Naive thymus-derived CD4-positive, alpha-beta T cell (primary cell): ENCODE measurements at regions of chr10 and their contacts with region 1.

Region 1: GRCh38 chr10:109934958-109935706 is 11.8 kb upstream of the XPNPEP1 start:
- DNase-seq: peak in 8 of 9 donors; percentile 23 to 54 (median 46)
- ATAC-seq: peak; percentile 47
- H3K4me3 ChIP-seq: peak overlapping the region; percentile 33
- H3K4me3 Mint-ChIP-seq: peak overlapping the region; percentile 72 to 97 (median 87)
- H3K27ac ChIP-seq: peak overlapping the region; percentile 64
- H3K27ac Mint-ChIP-seq: peak overlapping the region; percentile 88 to 99 (median 96)
- H3K4me1 ChIP-seq: peaks cover 36 to 56% of the 10 kb centered on the region in 2 donors
- H3K4me1 Mint-ChIP-seq: peaks cover 33 to 83% (median 71%) of the 10 kb centered on the region in 7 donors
- H3K27me3 ChIP-seq: no peaks in the 10 kb centered on the region
- H3K27me3 Mint-ChIP-seq: peaks cover 0 to 8% (median 0%) of the 10 kb centered on the region in 5 donors

Region 2: DNA sequence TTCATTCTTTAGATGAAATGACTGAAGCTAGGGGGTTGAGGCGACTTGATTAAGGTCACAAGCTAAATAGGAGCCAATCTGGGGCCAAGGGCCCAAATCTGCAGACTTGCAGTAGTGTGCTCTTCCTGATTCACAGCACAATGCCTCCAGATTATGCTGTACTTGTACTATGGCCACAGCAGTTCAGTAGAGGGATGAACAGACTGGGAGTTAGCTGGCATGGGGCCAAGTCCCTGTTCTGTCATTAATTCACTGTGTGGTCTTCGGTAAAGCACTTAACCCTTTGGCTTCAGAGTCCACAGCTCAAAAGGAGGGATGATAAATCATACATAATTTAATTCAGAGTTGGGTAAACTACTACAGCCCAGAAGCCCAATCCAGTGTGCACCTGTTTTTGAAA is 208.7 kb before region 1 on chr10:
- CTCF ChIA-PET with region 1: no interaction called
- POLR2A ChIA-PET with region 1: no interaction called
- intact Hi-C with region 1: no loop called
- DNase-seq: no peak
- ATAC-seq: no peak
- H3K4me3 ChIP-seq: no peak overlapping the region
- H3K4me3 Mint-ChIP-seq: no peak overlapping the region
- H3K27ac ChIP-seq: no peak overlapping the region
- H3K27ac Mint-ChIP-seq: no peak overlapping the region
- H3K4me1 ChIP-seq: no peaks in the 10 kb centered on the region
- H3K4me1 Mint-ChIP-seq: no peaks in the 10 kb centered on the region
- H3K27me3 ChIP-seq: no peaks in the 10 kb centered on the region
- H3K27me3 Mint-ChIP-seq: peaks cover 0 to 19% (median 0%) of the 10 kb centered on the region in 5 donors

Region 3: DNA sequence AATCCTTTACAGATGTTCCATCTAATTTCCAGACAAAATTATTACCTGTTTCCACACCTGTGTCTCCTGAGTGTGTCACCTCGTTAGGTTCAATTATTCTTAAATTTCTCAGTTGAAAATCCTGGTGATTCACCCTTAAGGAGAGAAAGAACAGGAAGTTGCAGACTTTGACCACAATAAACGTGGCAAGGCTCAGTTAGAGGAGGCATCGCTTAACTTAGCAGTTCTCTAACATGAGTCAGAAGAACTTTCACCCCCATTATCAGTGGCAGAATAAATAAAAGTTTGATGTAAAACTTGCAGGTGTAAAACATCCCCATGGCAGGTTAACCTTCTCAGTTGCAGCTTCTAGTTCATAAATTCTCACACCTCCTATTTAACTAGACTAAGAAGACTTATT is 20.2 kb before region 1 on chr10:
- CTCF ChIA-PET with region 1: interaction called, 4 read pairs
- POLR2A ChIA-PET with region 1: interaction called, 7 read pairs
- intact Hi-C with region 1: loop called in 1 of 2 experiments (anchors 1 kb)
- DNase-seq: peak in 7 of 9 donors; percentile 37 to 71 (median 56)
- ATAC-seq: peak; percentile 93
- H3K4me3 ChIP-seq: no peak overlapping the region
- H3K4me3 Mint-ChIP-seq: peak overlapping the region; percentile 56 to 78 (median 68)
- H3K27ac ChIP-seq: no peak overlapping the region
- H3K27ac Mint-ChIP-seq: peak overlapping the region in 8 of 9 donors; percentile 40 to 88 (median 58)
- H3K4me1 ChIP-seq: peaks cover 32 to 60% of the 10 kb centered on the region in 2 donors
- H3K4me1 Mint-ChIP-seq: peaks cover 64 to 94% (median 87%) of the 10 kb centered on the region in 7 donors
- H3K27me3 ChIP-seq: no peaks in the 10 kb centered on the region
- H3K27me3 Mint-ChIP-seq: no peaks in the 10 kb centered on the region

Region 4: GRCh38 chr10:109922976-109923921 is 11.9 kb before region 1 on chr10 and contains the start of gene XPNPEP1:
- CTCF ChIA-PET with region 1: interaction called, 3 read pairs
- POLR2A ChIA-PET with region 1: interaction called, 16 read pairs
- intact Hi-C with region 1: loop called in 1 of 2 experiments (anchors 1 kb)
- DNase-seq: peak; percentile 55 to 90 (median 66)
- ATAC-seq: peak; percentile 98
- H3K4me3 ChIP-seq: peak within 1 kb of the TSS; percentile 67
- H3K4me3 Mint-ChIP-seq: peak within 1 kb of the TSS; percentile 78 to 94 (median 90)
- H3K27ac ChIP-seq: peak within 1 kb of the TSS; percentile 83
- H3K27ac Mint-ChIP-seq: peak within 1 kb of the TSS; percentile 75 to 95 (median 89)
- H3K4me1 ChIP-seq: peaks cover 30 to 39% of the 10 kb centered on the region in 2 donors
- H3K4me1 Mint-ChIP-seq: peaks cover 36 to 58% (median 54%) of the 10 kb centered on the region in 7 donors
- H3K27me3 ChIP-seq: no peaks in the 10 kb centered on the region
- H3K27me3 Mint-ChIP-seq: peaks cover 0 to 16% (median 0%) of the 10 kb centered on the region in 5 donors
- total RNA-seq, gene XPNPEP1: 44.1 to 100 (median 60.7) TPM

Region 5: GRCh38 chr10:109956454-109957091 is 21.4 kb after region 1 on chr10:
- CTCF ChIA-PET with region 1: interaction called, 3 read pairs
- POLR2A ChIA-PET with region 1: interaction called, 4 read pairs
- intact Hi-C with region 1: loop called in 1 of 2 experiments (anchors 2 kb)
- DNase-seq: peak in 1 of 9 donors; percentile 9
- ATAC-seq: peak; percentile 54
- H3K4me3 ChIP-seq: no peak overlapping the region
- H3K4me3 Mint-ChIP-seq: no peak overlapping the region
- H3K27ac ChIP-seq: no peak overlapping the region
- H3K27ac Mint-ChIP-seq: no peak overlapping the region
- H3K4me1 ChIP-seq: no peaks in the 10 kb centered on the region
- H3K4me1 Mint-ChIP-seq: peaks cover 0 to 15% (median 0%) of the 10 kb centered on the region in 7 donors
- H3K27me3 ChIP-seq: no peaks in the 10 kb centered on the region
- H3K27me3 Mint-ChIP-seq: peaks cover 0 to 18% (median 0%) of the 10 kb centered on the region in 5 donors

Region 6: GRCh38 chr10:110501142-110501937 is 566.2 kb after region 1 on chr10:
- CTCF ChIA-PET with region 1: no interaction called
- POLR2A ChIA-PET with region 1: no interaction called
- intact Hi-C with region 1: no loop called
- DNase-seq: peak in 1 of 9 donors; percentile 73
- ATAC-seq: no peak
- H3K4me3 ChIP-seq: no peak overlapping the region
- H3K4me3 Mint-ChIP-seq: peak overlapping the region in 7 of 10 donors; percentile 10 to 97 (median 41)
- H3K27ac ChIP-seq: no peak overlapping the region
- H3K27ac Mint-ChIP-seq: peak overlapping the region in 2 of 9 donors; percentile 93 to 94
- H3K4me1 ChIP-seq: peaks cover 49 to 76% of the 10 kb centered on the region in 2 donors
- H3K4me1 Mint-ChIP-seq: peaks cover 62 to 85% (median 73%) of the 10 kb centered on the region in 7 donors
- H3K27me3 ChIP-seq: no peaks in the 10 kb centered on the region
- H3K27me3 Mint-ChIP-seq: peaks cover 0 to 3% (median 0%) of the 10 kb centered on the region in 5 donors